GM13976 (cell line): ENCODE measurements at regions of chr7 and their contacts with region 1.

Region 1: DNA sequence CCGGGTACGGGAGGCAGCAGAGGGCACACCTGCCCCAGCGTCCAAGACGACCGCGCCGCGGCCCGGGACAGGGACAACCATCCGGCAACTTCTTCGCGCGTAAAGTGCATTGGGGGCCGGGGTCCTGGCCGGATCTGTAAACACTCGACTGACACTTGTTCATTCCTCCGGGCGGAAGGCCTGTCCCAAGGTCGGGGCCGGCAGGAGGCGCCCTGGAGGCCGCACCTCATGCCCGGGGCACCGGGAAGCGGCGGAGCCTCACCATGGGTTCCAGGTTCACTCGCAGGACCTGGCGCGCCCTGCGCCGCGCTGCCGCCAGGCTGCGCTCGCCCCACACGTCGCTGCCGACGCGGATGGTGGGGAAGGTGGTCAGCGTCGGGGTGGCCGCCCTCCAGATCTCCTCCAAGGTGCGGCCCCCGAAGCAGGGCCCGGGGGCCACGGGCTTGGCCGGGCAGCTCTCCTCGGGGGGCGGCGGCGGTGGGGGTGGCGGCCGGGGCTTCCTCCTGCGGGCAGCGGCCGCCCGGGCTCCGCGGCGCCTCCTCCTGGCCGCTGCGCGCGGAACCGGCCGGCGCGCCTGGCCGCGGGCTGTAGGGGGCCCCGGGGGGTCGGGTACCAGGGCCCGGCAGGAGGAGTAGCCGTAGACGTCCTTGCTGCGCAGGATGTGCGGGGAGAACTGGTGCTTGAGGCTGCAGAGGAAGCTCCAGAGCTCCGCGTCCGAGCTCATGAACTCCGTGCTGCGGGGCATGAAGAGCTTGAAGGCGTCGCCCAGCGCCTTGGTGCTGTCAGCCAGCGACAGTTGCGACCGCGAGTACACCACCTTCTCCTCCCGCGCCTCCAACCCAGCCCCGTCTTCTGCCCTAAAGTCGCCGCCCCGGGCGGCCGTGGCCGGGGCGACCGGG is 746 bp downstream of the CCDC71L start:
- DNase-seq: peak; percentile 89
- CTCF ChIP-seq: peak; percentile 95

Region 2: DNA sequence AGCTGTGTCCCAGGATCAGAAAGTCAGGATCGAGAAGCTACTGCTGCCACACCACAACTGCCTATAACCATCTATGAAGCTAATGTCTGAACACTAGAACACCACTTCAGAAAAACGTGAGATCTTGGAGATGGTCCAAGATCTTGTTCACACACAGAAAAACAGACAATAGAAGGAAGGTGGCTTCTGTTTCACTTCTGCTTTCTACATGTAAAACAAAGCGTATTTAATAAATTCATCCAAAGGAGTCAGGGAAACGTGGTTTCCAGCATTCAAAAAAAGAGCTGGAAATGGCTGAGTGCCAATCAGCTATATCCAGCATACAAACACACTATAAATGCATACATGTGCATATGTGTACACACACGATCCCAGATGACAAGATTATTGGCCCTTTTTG is 71.0 kb after region 1 on chr7:
- in situ Hi-C with region 1: loop called (anchors 5 kb)
- DNase-seq: peak; percentile 37
- CTCF ChIP-seq: no peak